ENCODE measurements at regions of chr5 and their contacts with region 1.

Region 1: DNA sequence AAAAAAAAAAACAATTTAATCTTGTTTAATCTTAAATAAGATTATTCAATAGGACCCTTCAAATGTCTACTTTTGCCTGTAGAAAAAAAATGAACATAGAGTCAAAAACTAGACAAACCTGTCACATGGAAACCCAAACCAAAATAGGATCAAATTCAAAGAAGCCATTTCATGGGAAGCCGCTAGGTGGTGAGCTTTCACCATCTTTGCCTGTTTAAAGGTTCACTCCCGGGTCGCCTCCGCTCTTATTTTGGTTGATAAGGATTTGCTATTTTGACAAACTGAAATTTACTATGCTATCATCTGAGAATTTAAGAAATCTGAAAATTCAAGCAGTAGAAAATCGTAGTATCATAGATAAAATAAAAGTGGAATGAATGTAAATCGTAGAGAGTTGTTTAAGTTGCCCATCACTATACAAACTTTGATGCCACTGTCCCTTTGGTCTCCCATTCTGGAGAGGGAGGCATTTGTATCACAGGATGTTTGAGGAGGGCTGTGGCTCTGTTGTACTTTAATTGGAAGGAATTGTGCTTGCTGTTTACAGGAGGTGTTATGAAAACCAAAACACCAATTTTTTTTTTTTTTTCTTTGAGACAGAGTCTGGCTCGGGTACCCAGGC is 43.5 kb upstream of the DNAH5 start:
- DNase-seq: no peak
- ATAC-seq: no peak
- H3K4me3 ChIP-seq: no peak overlapping the region
- H3K4me3 Mint-ChIP-seq: no peak overlapping the region
- H3K27ac ChIP-seq: no peak overlapping the region
- H3K27ac Mint-ChIP-seq: no peak overlapping the region
- H3K4me1 ChIP-seq: no peaks in the 10 kb centered on the region
- H3K4me1 Mint-ChIP-seq: no peaks in the 10 kb centered on the region
- H3K27me3 ChIP-seq: no peaks in the 10 kb centered on the region
- H3K27me3 Mint-ChIP-seq: peaks cover 0 to 13% (median 4%) of the 10 kb centered on the region in 5 donors

Region 2: DNA sequence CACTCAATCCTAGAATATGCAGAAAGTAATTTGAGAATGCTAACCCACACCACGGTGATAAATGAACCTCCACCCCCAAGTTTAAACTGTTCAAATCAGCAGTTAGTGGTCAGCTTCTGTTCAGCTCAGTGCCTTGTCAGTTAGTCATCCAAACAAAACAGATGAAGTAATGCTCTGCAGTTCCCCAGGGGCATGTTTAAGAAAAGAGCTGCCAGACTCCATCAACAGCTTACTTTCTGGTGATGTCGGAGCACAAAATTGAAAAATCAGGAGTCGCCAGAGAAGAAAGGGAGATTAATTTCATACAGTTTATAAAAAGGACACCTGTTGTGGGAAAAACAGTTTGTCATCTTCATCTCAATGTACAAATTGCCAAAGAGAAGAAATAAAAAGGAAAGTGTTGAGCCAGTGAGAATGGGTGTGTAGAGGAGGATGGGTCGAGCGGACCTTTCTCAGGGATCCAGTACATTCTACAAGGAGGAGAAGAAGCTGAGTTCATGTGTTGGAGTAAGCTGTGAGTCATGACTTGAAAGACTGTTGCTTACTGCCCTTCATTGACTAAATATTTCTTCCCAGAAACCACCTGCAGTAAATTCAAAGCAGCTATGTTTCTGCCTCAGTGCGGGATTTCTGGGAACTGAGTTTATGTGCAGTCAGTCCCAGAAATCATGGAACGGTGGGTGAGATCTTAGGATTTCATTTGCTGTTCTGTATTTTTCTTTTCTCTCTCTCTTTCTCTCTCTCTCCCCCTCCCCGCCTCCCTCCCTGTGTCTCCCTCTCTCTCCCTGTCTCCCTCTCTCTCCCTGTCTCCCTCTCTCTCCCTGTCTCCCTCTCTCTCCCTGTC is 168.9 kb after region 1 on chr5:
- CTCF ChIA-PET with region 1: no interaction called
- POLR2A ChIA-PET with region 1: no interaction called
- intact Hi-C with region 1: no loop called
- DNase-seq: no peak
- ATAC-seq: peak; percentile 48
- H3K4me3 ChIP-seq: no peak overlapping the region
- H3K4me3 Mint-ChIP-seq: no peak overlapping the region
- H3K27ac ChIP-seq: no peak overlapping the region
- H3K27ac Mint-ChIP-seq: no peak overlapping the region
- H3K4me1 ChIP-seq: no peaks in the 10 kb centered on the region
- H3K4me1 Mint-ChIP-seq: no peaks in the 10 kb centered on the region
- H3K27me3 ChIP-seq: no peaks in the 10 kb centered on the region
- H3K27me3 Mint-ChIP-seq: peaks cover 5 to 16% (median 14%) of the 10 kb centered on the region in 5 donors

Region 3: GRCh38 chr5:14270209-14270702 is 282.3 kb after region 1 on chr5:
- CTCF ChIA-PET with region 1: no interaction called
- POLR2A ChIA-PET with region 1: no interaction called
- intact Hi-C with region 1: loop called (anchors 2 to 5 kb)
- DNase-seq: peak in 2 of 9 donors; percentile 12 to 22
- ATAC-seq: peak; percentile 57
- H3K4me3 ChIP-seq: no peak overlapping the region
- H3K4me3 Mint-ChIP-seq: no peak overlapping the region
- H3K27ac ChIP-seq: no peak overlapping the region
- H3K27ac Mint-ChIP-seq: no peak overlapping the region
- H3K4me1 ChIP-seq: no peaks in the 10 kb centered on the region
- H3K4me1 Mint-ChIP-seq: peaks cover 0 to 5% (median 0%) of the 10 kb centered on the region in 7 donors
- H3K27me3 ChIP-seq: no peaks in the 10 kb centered on the region
- H3K27me3 Mint-ChIP-seq: peaks cover 12 to 38% (median 36%) of the 10 kb centered on the region in 5 donors

Region 4: DNA sequence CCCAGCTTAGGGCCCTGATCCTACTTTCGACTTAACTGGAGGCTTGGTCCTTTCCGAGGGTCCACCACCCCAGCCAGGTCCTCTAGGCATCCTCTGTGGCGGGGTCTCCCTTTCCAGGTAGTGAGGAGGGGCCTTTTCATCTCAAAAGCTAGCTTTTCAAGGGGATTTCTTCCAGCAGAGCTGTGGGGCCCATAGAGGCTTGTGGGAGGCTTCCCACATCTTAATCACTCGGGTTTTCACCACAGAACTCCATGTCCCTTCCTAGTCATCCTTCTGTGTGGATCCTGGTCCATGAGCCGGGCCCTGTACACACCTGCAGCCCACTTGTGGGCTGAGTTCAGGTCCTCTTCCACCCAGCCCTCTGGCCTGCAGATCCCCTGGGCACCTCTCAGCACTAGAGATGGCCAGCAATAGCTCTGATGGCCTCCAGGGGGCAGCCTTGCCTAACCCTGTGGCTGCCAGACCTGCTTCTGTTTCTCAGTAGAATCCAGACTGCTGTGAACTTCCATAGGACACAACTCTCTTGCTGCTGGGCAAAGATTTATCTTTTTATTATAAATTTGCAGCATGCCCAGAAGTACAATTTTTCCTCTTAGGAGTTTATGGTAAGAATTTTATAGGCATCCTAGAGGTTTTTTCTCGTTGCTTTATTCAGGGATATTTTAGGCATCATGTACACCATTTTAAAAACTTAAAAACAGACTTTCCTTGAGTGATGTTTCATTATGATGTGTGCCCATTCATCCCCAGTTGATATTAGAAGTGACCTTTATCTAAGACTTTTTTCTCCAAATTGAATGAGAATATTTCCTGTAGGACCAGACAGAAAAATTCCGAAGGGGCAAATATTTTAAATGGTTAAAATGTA is 364.1 kb after region 1 on chr5:
- CTCF ChIA-PET with region 1: no interaction called
- POLR2A ChIA-PET with region 1: no interaction called
- intact Hi-C with region 1: loop called in 1 of 2 experiments (anchors 5 kb)
- DNase-seq: peak; percentile 22 to 64 (median 50)
- ATAC-seq: peak; percentile 94
- H3K4me3 ChIP-seq: no peak overlapping the region
- H3K4me3 Mint-ChIP-seq: no peak overlapping the region
- H3K27ac ChIP-seq: no peak overlapping the region
- H3K27ac Mint-ChIP-seq: no peak overlapping the region
- H3K4me1 ChIP-seq: no peaks in the 10 kb centered on the region
- H3K4me1 Mint-ChIP-seq: peaks cover 0 to 4% (median 0%) of the 10 kb centered on the region in 7 donors
- H3K27me3 ChIP-seq: no peaks in the 10 kb centered on the region
- H3K27me3 Mint-ChIP-seq: peaks cover 0 to 8% (median 0%) of the 10 kb centered on the region in 5 donors